PC-9 (cell line): ENCODE measurements at regions of chr9 and their contacts with region 1.

Region 1: DNA sequence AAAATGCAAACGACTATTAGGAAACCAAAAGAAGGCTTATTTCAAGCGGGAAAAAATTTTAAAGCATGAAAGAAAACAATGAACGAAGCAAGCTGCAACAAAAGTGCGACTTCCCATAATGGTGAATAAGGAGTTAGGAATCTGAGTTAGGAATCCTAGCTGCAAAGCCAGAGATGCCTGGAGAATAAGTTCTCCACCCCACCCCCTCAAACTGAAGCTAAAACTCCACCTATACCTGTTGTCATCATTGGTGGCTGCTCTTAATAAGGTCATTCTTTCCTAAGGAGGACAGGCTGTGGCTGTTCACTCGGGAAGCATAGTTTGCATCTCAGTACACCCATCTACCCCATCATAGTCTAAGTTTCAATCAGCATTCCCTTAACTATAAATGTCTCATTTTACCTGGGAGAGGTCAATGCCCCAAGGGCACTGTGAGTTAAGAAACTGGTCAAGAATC is 147.2 kb downstream of the GNAQ start:
- DNase-seq: peak; percentile 68 to 90
- H3K4me3 ChIP-seq: 0 out of 2 replicates have a peak overlapping the region, but pooled peaks have one; percentile 20
- H3K27ac ChIP-seq: peak overlapping the region; percentile 75
- H3K4me1 ChIP-seq: peaks cover 72% of the 10 kb centered on the region
- H3K27me3 ChIP-seq: no peaks in the 10 kb centered on the region
- CTCF ChIP-seq: no peak

Region 2: GRCh38 chr9:77598524-77598923 is 285.9 kb before region 1 on chr9:
- CTCF ChIA-PET with region 1: no interaction called
- POLR2A ChIA-PET with region 1: no interaction called
- intact Hi-C with region 1: no loop called
- DNase-seq: no peak
- H3K4me3 ChIP-seq: no peak overlapping the region
- H3K27ac ChIP-seq: no peak overlapping the region
- H3K4me1 ChIP-seq: no peaks in the 10 kb centered on the region
- H3K27me3 ChIP-seq: no peaks in the 10 kb centered on the region
- CTCF ChIP-seq: no peak

Region 3: DNA sequence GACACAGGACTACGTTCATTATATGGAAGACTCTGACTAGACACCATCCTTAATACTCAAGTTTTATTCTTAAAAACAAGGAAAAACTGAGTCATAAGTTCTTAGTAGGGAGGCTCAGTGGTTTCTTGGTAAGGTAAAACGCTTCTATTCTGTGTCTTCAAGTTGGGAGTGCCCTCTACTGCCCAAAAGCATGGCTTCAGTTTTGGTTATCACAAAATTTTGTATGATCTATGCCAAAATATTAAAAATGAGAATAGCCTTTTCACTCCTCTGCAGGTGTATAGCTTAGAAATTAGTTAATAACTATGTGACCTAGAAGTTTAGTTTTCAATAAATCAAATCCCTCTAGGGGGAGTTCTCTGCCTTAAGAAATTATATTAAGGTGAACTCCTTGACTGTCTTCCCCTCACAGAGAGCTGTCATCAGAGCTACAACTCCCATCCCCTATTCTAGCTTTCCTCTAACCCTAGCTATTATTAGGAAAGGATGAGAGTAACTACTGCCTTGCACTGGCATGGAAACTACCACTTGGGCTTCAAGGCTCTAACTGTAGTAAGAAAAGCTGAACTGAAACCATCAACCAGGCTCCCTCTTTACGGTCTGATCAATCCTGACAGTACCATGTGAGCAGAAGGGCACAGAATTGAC is 42.6 kb before region 1 on chr9:
- CTCF ChIA-PET with region 1: interaction called, 10 read pairs
- POLR2A ChIA-PET with region 1: no interaction called
- intact Hi-C with region 1: no loop called
- DNase-seq: no peak
- H3K4me3 ChIP-seq: no peak overlapping the region
- H3K27ac ChIP-seq: no peak overlapping the region
- H3K4me1 ChIP-seq: peaks cover 22% of the 10 kb centered on the region
- H3K27me3 ChIP-seq: no peaks in the 10 kb centered on the region
- CTCF ChIP-seq: peak; percentile 45

Region 4: DNA sequence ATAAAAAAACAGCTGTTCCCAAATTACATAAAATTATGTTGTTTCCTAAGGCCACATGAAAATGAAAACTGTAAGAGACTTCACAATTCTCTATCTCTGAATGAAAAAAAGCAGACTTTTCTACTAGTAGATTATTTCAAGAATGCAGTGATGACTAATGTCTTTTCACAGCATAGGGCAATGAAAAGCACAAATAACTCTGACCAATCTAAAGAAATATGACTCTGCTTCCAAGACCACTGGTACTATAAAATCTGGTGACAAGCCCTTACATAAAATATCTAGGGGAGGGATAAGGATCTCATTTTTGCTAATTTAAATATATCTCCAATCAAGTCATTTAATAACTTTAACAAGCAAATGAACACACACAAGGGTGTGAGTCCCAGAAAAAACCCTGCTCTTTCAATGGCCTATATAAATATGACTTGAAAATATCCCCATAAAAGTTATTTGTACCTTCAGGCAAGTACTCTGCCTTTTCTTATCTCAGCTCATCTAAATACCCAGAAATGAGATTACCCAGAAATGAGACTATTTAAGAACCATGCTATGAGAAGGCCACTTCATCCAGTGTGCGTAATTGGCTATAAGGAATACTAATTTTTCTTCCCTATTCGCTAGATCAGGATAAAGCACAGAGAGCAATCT is 42.0 kb after region 1 on chr9:
- CTCF ChIA-PET with region 1: no interaction called
- POLR2A ChIA-PET with region 1: no interaction called
- intact Hi-C with region 1: loop called (anchors 2 kb)
- DNase-seq: peak in 1 of 2 experiments; percentile 76
- H3K4me3 ChIP-seq: no peak overlapping the region
- H3K27ac ChIP-seq: peak overlapping the region; percentile 48
- H3K4me1 ChIP-seq: peaks cover 20% of the 10 kb centered on the region
- H3K27me3 ChIP-seq: no peaks in the 10 kb centered on the region
- CTCF ChIP-seq: no peak

Region 5: DNA sequence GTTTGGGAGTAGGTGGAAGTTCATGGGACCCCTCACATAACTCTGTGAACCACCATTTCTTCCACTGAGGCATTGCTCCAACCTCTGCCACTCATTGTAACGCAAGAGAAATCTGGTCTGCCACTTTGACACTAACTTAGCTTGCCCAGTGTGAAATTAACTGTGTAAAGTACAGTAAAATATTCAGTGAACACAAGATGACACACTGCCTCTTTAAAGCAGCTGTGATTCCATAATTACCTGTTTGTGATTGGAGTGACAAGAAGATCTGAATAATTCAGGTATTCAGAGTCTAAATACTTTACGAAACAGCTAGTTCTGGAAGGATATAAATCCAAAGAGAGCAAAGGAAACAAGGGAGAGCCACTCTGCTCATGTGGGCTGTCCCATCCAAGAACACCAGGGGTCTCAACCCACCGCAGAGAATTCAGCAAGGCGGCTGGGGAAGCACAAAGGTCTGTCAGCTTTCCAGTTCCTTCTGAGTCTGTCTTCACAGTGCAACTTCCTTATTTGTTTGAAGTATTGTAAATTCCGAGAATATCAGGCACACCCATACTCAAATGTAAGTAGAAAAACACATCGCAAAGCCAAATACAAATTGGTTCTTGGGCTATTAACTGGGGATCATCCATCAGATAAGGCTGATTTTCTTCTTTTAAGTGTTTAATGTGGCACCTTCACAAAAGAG is 60.3 kb after region 1 on chr9:
- CTCF ChIA-PET with region 1: no interaction called
- POLR2A ChIA-PET with region 1: interaction called, 11 read pairs
- intact Hi-C with region 1: no loop called
- DNase-seq: no peak
- H3K4me3 ChIP-seq: no peak overlapping the region
- H3K27ac ChIP-seq: no peak overlapping the region
- H3K4me1 ChIP-seq: no peaks in the 10 kb centered on the region
- H3K27me3 ChIP-seq: no peaks in the 10 kb centered on the region
- CTCF ChIP-seq: no peak

Region 6: DNA sequence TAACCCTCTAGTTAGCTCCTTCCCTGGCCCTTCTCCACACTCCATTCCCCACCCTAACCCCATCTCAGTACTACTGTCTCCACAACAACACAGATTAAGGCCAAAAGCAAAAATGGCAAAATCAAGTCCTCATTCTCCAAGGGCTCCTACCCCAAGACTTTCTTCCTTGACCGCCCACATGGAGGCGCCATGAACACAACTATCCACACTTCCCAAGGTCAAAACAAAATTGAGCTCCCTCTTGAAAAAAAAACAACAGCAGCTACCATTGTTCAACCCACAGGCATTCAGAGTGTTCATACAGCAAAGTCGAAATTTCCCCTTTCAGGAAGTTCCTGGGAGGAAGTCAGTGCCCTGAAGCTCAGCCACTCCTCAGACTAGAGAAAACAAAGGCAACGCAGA is 92.8 kb after region 1 on chr9:
- CTCF ChIA-PET with region 1: no interaction called
- POLR2A ChIA-PET with region 1: interaction called, 4 read pairs
- intact Hi-C with region 1: loop called (anchors 5 kb)
- DNase-seq: peak; percentile 39 to 43
- H3K4me3 ChIP-seq: no peak overlapping the region
- H3K27ac ChIP-seq: no peak overlapping the region
- H3K4me1 ChIP-seq: peaks cover 25% of the 10 kb centered on the region
- H3K27me3 ChIP-seq: no peaks in the 10 kb centered on the region
- CTCF ChIP-seq: peak; percentile 36; the same call in 1 of the 2 replicates